ENCODE measurements at regions of chr15 and their contacts with region 1.

Region 1: GRCh38 chr15:42858540-42858939 is 62.0 kb downstream of the TTBK2 start:
- DNase-seq: no peak
- H3K4me3 ChIP-seq: no peak overlapping the region
- H3K27me3 ChIP-seq: no peaks in the 10 kb centered on the region
- CTCF ChIP-seq: no peak

Region 2: GRCh38 chr15:42736793-42737528 is 121.6 kb before region 1 on chr15 and contains the start of gene CDAN1:
- CTCF ChIA-PET with region 1: no interaction called
- POLR2A ChIA-PET with region 1: interaction called, 14 read pairs
- DNase-seq: peak; percentile 26
- H3K4me3 ChIP-seq: peak within 1 kb of the TSS; percentile 80
- H3K27me3 ChIP-seq: no peaks in the 10 kb centered on the region
- CTCF ChIP-seq: no peak
- polyA plus RNA-seq, gene CDAN1: 4.3 TPM in 2 replicates

Measured in BJ (cell line).